PC-3 (cell line): ENCODE measurements at regions of chr4 and their contacts with region 1.

Region 1: DNA sequence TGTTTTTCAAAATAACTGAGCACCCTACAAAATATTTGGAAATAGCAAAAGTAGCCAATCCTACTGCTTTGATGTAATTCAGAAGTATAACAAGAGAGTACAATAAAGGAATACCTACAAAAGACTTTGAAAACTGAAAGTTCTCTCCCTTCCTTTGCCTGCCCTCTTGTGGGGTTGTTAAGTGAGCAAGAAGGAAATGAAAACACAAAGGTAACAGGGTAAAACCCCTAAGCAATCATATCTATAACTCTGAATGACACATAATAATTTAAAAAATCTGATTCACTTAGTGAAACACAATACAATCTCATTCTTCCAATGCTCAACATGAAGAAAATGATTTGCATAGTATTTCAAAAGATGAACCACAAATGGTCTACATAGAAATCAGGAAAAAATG is 98.2 kb downstream of the FRYL start:
- DNase-seq: peak; percentile 33
- ATAC-seq: peak; percentile 61; the same call in 1 of the 2 replicates
- H3K4me3 ChIP-seq: no peak overlapping the region
- H3K27ac ChIP-seq: no peak overlapping the region
- H3K4me1 ChIP-seq: 0 out of 2 replicates have a peak, but pooled peaks cover 6% of the 10 kb centered on the region
- H3K27me3 ChIP-seq: no peaks in the 10 kb centered on the region
- CTCF ChIP-seq: peak; percentile 64

Region 2: DNA sequence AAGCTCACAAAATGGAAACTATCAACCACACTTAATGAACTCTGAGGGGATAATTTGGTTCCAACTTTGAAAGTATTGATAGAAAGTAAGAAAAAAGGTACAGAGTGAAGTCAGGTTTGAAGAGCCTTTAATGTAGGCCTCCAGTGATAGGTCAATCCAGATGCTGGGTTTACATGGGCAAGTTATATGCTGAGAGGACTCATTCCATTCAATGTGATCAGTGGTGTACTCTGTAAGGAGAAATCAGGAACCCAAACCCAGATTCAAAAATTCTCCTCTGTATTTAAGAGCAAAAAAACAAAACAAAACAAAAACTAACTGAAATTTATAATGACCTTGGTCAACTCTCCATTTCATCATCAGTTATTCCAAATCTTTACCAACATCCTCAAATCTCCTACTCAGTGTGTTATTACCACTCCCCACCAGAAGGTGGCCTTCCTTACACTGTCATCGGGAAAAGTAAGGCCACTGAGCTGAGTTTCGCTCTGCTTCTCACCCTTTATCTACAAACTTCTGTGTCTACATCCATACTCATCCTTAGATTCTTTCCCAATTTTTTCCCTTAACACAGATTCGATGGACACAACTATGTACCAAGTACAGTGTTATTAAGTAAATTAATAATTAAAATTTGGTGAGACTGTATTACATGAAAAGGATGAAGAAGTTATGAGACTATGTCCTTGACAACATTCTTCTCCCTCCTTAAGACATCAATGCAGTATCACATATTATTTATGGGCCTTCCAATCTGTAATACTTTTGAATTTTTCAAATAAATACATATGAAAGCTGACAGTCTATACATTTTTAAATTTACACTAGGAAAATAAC is 103.5 kb before region 1 on chr4:
- CTCF ChIA-PET with region 1: interaction called, 4 read pairs
- POLR2A ChIA-PET with region 1: no interaction called
- intact Hi-C with region 1: loop called (anchors 1 kb)
- DNase-seq: peak; percentile 67
- ATAC-seq: peak; percentile 73
- H3K4me3 ChIP-seq: no peak overlapping the region
- H3K27ac ChIP-seq: no peak overlapping the region
- H3K4me1 ChIP-seq: no peaks in the 10 kb centered on the region
- H3K27me3 ChIP-seq: no peaks in the 10 kb centered on the region
- CTCF ChIP-seq: peak; percentile 80